ENCODE measurements at regions of chr5 and their contacts with region 1.

Region 1: GRCh38 chr5:66144074-66144833 is at the start of gene SREK1:
- DNase-seq: peak; percentile 93
- ATAC-seq: peak; percentile 90
- H3K4me3 Mint-ChIP-seq: peak within 1 kb of the TSS; percentile 89
- H3K27ac Mint-ChIP-seq: peak within 1 kb of the TSS; percentile 99
- H3K4me1 Mint-ChIP-seq: peaks cover 42% of the 10 kb centered on the region
- H3K27me3 Mint-ChIP-seq: no peaks in the 10 kb centered on the region
- CTCF ChIP-seq: no peak
- total RNA-seq, gene SREK1: 53.9 to 60.2 TPM

Region 2: GRCh38 chr5:64768358-64769312 is 1375.6 kb before region 1 on chr5 and contains the starts of genes CWC27 and SREK1IP1:
- CTCF ChIA-PET with region 1: no interaction called
- POLR2A ChIA-PET with region 1: no interaction called
- intact Hi-C with region 1: loop called (anchors 10 kb)
- DNase-seq: peak; percentile 85
- ATAC-seq: peak; percentile 98
- H3K4me3 Mint-ChIP-seq: peak within 1 kb of the TSS; percentile 100
- H3K27ac Mint-ChIP-seq: peak within 1 kb of the TSS; percentile 99
- H3K4me1 Mint-ChIP-seq: peaks cover 48% of the 10 kb centered on the region
- H3K27me3 Mint-ChIP-seq: no peaks in the 10 kb centered on the region
- CTCF ChIP-seq: no peak
- total RNA-seq, gene CWC27: 32.3 to 38.1 TPM
- total RNA-seq, gene SREK1IP1: 20.5 to 22.9 TPM

Region 3: DNA sequence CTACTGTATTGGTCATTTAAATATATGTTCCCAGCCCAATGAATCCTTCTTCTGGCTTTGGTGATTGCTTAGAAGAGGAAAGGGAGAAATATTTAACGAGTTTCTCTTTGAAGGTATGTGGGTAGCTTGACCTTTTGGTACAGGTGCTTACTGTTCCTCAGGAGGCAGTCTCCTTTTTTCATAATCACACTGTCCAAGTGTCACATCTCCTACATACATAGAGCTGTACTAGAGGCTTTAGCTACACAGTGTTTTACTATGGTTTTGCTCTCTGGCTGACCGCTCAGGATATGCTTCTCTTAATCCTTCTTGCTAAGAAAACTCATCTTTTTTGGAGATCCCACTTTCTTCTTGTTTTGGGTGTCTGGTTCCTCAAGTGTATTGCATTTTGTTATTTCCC is 211.0 kb before region 1 on chr5:
- CTCF ChIA-PET with region 1: no interaction called
- POLR2A ChIA-PET with region 1: interaction called, 5 read pairs
- intact Hi-C with region 1: loop called (anchors 5 kb)
- DNase-seq: no peak
- ATAC-seq: peak; percentile 57
- H3K4me3 Mint-ChIP-seq: no peak overlapping the region
- H3K27ac Mint-ChIP-seq: peak overlapping the region; percentile 68
- H3K4me1 Mint-ChIP-seq: peaks cover 73% of the 10 kb centered on the region
- H3K27me3 Mint-ChIP-seq: no peaks in the 10 kb centered on the region
- CTCF ChIP-seq: no peak

Region 4: GRCh38 chr5:66015196-66015960 is 128.9 kb before region 1 on chr5:
- CTCF ChIA-PET with region 1: no interaction called
- POLR2A ChIA-PET with region 1: no interaction called
- intact Hi-C with region 1: no loop called
- DNase-seq: no peak
- ATAC-seq: no peak
- H3K4me3 Mint-ChIP-seq: no peak overlapping the region
- H3K27ac Mint-ChIP-seq: no peak overlapping the region
- H3K4me1 Mint-ChIP-seq: peaks cover 38% of the 10 kb centered on the region
- H3K27me3 Mint-ChIP-seq: no peaks in the 10 kb centered on the region
- CTCF ChIP-seq: no peak

Measured in activated CD8-positive, alpha-beta T cell treated with anti-CD3 and anti-CD28 coated beads for 36 hours (primary cell).